ENCODE measurements at regions of chr9 and their contacts with region 1.

Region 1: DNA sequence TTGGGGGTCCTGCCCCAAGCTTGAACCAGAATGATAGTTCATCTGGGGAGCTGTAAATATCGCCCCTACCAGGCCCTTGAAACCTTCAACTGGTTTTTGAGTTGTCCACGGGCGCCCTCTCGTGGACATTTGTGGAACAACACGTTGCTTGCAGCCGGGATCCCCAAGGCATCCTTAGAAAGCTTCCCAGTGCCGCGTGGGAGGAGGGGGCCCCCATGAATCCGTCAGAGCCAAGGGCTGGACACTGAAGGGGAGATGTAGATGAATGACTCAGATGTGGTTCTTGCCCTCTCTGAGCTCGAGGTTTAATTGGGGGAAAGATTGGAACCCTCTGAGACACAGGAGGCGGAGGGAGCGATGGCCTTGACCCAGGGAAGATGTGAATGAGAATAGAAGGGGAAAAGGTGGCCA is 31.8 kb upstream of the ORM1 start:
- DNase-seq: peak; percentile 30 to 73 (median 57)
- ATAC-seq: peak; percentile 65
- H3K4me3 ChIP-seq: no peak overlapping the region
- H3K4me3 Mint-ChIP-seq: no peak overlapping the region
- H3K27ac ChIP-seq: no peak overlapping the region
- H3K27ac Mint-ChIP-seq: peak overlapping the region in 1 of 9 donors; percentile 20
- H3K4me1 ChIP-seq: no peaks in the 10 kb centered on the region
- H3K4me1 Mint-ChIP-seq: peaks cover 0 to 5% (median 0%) of the 10 kb centered on the region in 7 donors
- H3K27me3 ChIP-seq: no peaks in the 10 kb centered on the region
- H3K27me3 Mint-ChIP-seq: peaks cover 2 to 7% (median 5%) of the 10 kb centered on the region in 5 donors

Region 2: DNA sequence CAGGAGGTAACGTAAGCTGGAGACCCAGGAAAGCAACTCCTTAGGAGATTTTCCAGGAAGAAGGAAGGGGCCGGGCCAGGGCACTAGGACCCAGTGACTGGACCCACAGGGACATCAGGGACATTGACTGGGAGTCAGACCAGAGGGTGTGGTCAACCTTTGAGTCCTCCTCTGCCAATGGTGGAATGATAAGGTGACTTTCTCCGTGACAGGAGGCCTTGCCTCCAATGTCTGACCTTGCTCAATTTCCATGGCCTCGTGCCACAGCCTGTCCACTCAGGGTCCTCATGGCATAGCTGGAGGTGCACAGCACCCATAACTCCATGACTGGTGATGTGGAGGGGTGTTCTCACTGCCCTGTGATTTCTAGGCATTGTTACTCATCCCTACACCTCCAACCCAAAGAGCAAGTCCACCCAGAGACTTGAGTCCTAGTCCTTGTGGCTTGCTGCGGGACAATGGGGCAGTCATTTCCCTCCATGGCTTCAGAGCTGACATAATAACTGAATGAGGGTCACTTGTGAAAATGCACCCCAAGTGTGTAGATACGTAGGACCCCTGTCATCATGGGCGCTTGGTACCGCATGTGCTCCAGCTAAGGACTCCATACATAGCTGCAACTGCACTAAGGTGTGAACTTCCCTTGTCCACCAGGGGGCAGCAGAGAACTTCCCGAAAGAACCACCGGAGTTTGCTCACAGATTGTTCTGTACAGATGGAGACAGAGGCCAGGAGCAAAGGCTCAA is 208.9 kb before region 1 on chr9:
- CTCF ChIA-PET with region 1: interaction called, 22 read pairs
- POLR2A ChIA-PET with region 1: no interaction called
- intact Hi-C with region 1: loop called (anchors 1 kb)
- DNase-seq: peak; percentile 42 to 79 (median 67)
- ATAC-seq: peak; percentile 75
- H3K4me3 ChIP-seq: no peak overlapping the region
- H3K4me3 Mint-ChIP-seq: no peak overlapping the region
- H3K27ac ChIP-seq: no peak overlapping the region
- H3K27ac Mint-ChIP-seq: no peak overlapping the region
- H3K4me1 ChIP-seq: no peaks in the 10 kb centered on the region
- H3K4me1 Mint-ChIP-seq: peaks cover 0 to 4% (median 0%) of the 10 kb centered on the region in 7 donors
- H3K27me3 ChIP-seq: no peaks in the 10 kb centered on the region
- H3K27me3 Mint-ChIP-seq: peaks cover 0 to 4% (median 3%) of the 10 kb centered on the region in 5 donors

Region 3: GRCh38 chr9:114108016-114108833 is 182.8 kb before region 1 on chr9:
- CTCF ChIA-PET with region 1: interaction called, 13 read pairs
- POLR2A ChIA-PET with region 1: no interaction called
- intact Hi-C with region 1: loop called (anchors 1 kb)
- DNase-seq: peak in 8 of 9 donors; percentile 10 to 70 (median 32)
- ATAC-seq: peak; percentile 74
- H3K4me3 ChIP-seq: no peak overlapping the region
- H3K4me3 Mint-ChIP-seq: no peak overlapping the region
- H3K27ac ChIP-seq: no peak overlapping the region
- H3K27ac Mint-ChIP-seq: peak overlapping the region in 1 of 9 donors; percentile 78
- H3K4me1 ChIP-seq: no peaks in the 10 kb centered on the region
- H3K4me1 Mint-ChIP-seq: peaks cover 0 to 3% (median 0%) of the 10 kb centered on the region in 7 donors
- H3K27me3 ChIP-seq: no peaks in the 10 kb centered on the region
- H3K27me3 Mint-ChIP-seq: peaks cover 3 to 23% (median 11%) of the 10 kb centered on the region in 5 donors

Measured in naive thymus-derived CD4-positive, alpha-beta T cell (primary cell).